Heart left ventricle (tissue), 16 donors: ENCODE measurements at regions of chr12 and their contacts with region 1.

Region 1: GRCh38 chr12:7431993-7432685 is 11.8 kb downstream of the CD163L1 start:
- DNase-seq: no peak
- ATAC-seq: no peak
- H3K4me3 ChIP-seq: no peak overlapping the region
- H3K27ac ChIP-seq: no peak overlapping the region
- H3K4me1 ChIP-seq: no peaks in the 10 kb centered on the region
- H3K27me3 ChIP-seq: peaks cover 0 to 17% (median 0%) of the 10 kb centered on the region in 9 donors
- CTCF ChIP-seq: no peak
- POLR2A ChIP-seq: no peak

Region 2: GRCh38 chr12:7486512-7486911 is 54.4 kb after region 1 on chr12:
- intact Hi-C with region 1: loop called in 1 of 10 experiments (anchors 2 kb)
- DNase-seq: no peak
- ATAC-seq: no peak
- H3K4me3 ChIP-seq: no peak overlapping the region
- H3K27ac ChIP-seq: no peak overlapping the region
- H3K4me1 ChIP-seq: peaks cover 0 to 18% (median 0%) of the 10 kb centered on the region in 12 donors
- H3K27me3 ChIP-seq: no peaks in the 10 kb centered on the region
- CTCF ChIP-seq: no peak
- POLR2A ChIP-seq: no peak